ENCODE measurements at regions of chr9 and their contacts with region 1.

Region 1: GRCh38 chr9:126791406-126792151 is 13.3 kb upstream of the ZBTB43 start:
- DNase-seq: no peak
- H3K4me3 Mint-ChIP-seq: no peak overlapping the region
- H3K27ac Mint-ChIP-seq: no peak overlapping the region
- H3K4me1 Mint-ChIP-seq: peaks cover 11% of the 10 kb centered on the region
- H3K27me3 Mint-ChIP-seq: peaks cover 54% of the 10 kb centered on the region

Region 2: DNA sequence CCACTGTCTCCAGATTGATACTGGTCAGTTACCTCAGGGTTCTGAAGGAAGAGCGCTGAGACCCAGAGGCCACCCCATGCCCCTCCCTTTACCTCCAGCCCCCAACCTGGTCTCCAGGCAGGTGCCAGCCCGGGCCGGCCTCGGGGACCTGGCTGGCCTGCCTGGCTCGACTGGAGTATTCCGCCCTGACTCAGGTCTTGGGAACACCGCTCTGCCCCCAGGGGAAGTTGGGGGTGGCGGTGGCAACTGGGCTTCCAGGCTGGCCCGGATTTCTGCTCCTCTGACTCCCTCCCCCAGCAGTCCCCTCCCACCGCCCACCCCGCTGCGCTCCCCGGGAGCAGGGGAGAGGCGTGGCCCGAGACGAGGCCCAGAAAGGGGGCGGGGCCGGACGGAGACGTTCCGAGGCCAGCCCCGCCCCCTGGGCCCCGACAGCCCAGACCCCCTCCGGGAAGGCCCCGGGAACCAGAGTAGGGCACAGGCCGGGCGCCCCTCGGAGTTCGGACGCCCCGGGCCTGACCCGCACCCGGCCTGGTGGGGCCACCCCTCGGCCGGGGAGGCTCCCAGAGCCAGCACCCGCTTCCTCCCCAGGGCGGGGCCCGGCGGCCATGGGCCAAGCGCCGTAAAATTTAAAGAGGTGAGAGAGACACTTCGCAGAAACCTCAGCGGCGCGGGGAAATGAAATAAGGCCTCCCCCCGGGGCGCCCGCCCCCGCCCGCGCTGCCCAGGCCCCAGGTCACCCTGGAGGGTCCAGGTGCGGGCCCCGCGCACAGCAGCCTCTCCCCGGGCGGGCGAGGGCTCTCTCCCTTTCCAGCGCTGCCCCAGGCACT is 69.1 kb before region 1 on chr9:
- CTCF ChIA-PET with region 1: interaction called, 4 read pairs
- POLR2A ChIA-PET with region 1: interaction called, 13 read pairs
- DNase-seq: peak; percentile 89
- H3K4me3 Mint-ChIP-seq: peak overlapping the region; percentile 89
- H3K27ac Mint-ChIP-seq: peak overlapping the region; percentile 74
- H3K4me1 Mint-ChIP-seq: peaks cover 43% of the 10 kb centered on the region
- H3K27me3 Mint-ChIP-seq: peaks cover 10% of the 10 kb centered on the region

Region 3: GRCh38 chr9:126763130-126763764 is 28.3 kb before region 1 on chr9:
- CTCF ChIA-PET with region 1: no interaction called
- POLR2A ChIA-PET with region 1: no interaction called
- DNase-seq: no peak
- H3K4me3 Mint-ChIP-seq: no peak overlapping the region
- H3K27ac Mint-ChIP-seq: no peak overlapping the region
- H3K4me1 Mint-ChIP-seq: no peaks in the 10 kb centered on the region
- H3K27me3 Mint-ChIP-seq: peaks cover 4% of the 10 kb centered on the region

Region 4: GRCh38 chr9:126781186-126782052 is 10.2 kb before region 1 on chr9:
- CTCF ChIA-PET with region 1: interaction called, 14 read pairs
- POLR2A ChIA-PET with region 1: no interaction called
- DNase-seq: peak; percentile 82
- H3K4me3 Mint-ChIP-seq: no peak overlapping the region
- H3K27ac Mint-ChIP-seq: no peak overlapping the region
- H3K4me1 Mint-ChIP-seq: no peaks in the 10 kb centered on the region
- H3K27me3 Mint-ChIP-seq: peaks cover 22% of the 10 kb centered on the region